GM12878 (cell line): ENCODE measurements at regions of chr2 and their contacts with region 1.

Region 1: GRCh38 chr2:231227309-231228162 is 29.1 kb downstream of the ARMC9 start:
- DNase-seq: peak; percentile 70
- ATAC-seq: peak; percentile 80
- H3K4me3 ChIP-seq: no peak overlapping the region
- H3K27ac ChIP-seq: peak overlapping the region; percentile 80
- H3K4me1 ChIP-seq: peaks cover 29% of the 10 kb centered on the region
- H3K27me3 ChIP-seq: no peaks in the 10 kb centered on the region
- CTCF ChIP-seq: peak; percentile 82 to 90 (median 89)
- EP300 ChIP-seq: no peak
- POLR2A ChIP-seq: no peak; the same call in 1 of the 2 replicates
- RAD21 ChIP-seq: peak; percentile 93

Region 2: DNA sequence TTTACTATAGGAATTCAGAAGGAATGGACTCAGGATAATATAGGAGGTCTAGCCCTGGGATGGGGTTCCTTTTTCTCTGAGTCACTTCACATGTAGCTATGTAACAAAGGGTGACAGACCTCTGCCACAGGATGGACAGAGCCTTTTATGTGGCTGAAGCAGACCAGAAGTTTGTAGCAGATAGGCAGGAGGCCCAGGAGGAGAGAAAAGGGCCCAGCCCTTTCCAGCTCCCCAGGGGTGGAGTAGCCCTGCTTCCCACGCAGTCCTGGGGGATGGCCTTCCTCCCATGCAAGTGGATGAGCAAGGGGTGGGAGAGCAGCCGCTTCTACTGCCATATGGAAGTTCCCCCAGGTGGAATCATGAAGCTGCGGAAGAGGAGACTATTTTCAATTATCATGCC is 11.2 kb after region 1 on chr2:
- CTCF ChIA-PET with region 1: interaction called, 29 read pairs
- POLR2A ChIA-PET with region 1: no interaction called
- RAD21 ChIA-PET with region 1: interaction called, 8 read pairs
- SMC1A ChIA-PET with region 1: interaction called, 4 read pairs
- in situ Hi-C with region 1: no loop called
- intact Hi-C with region 1: no loop called
- DNase-seq: no peak
- ATAC-seq: no peak
- H3K4me3 ChIP-seq: no peak overlapping the region
- H3K27ac ChIP-seq: no peak overlapping the region
- H3K4me1 ChIP-seq: no peaks in the 10 kb centered on the region
- H3K27me3 ChIP-seq: no peaks in the 10 kb centered on the region
- CTCF ChIP-seq: no peak
- EP300 ChIP-seq: no peak
- POLR2A ChIP-seq: no peak
- RAD21 ChIP-seq: no peak

Region 3: GRCh38 chr2:231297108-231297908 is 69.8 kb after region 1 on chr2:
- CTCF ChIA-PET with region 1: interaction called, 72 read pairs
- POLR2A ChIA-PET with region 1: no interaction called
- RAD21 ChIA-PET with region 1: interaction called, 13 read pairs
- SMC1A ChIA-PET with region 1: interaction called, 34 read pairs
- in situ Hi-C with region 1: no loop called
- intact Hi-C with region 1: loop called (anchors 1 kb)
- DNase-seq: peak; percentile 36
- ATAC-seq: peak; percentile 81
- H3K4me3 ChIP-seq: no peak overlapping the region
- H3K27ac ChIP-seq: no peak overlapping the region
- H3K4me1 ChIP-seq: peaks cover 40% of the 10 kb centered on the region
- H3K27me3 ChIP-seq: no peaks in the 10 kb centered on the region
- CTCF ChIP-seq: peak; percentile 73 to 90 (median 81)
- EP300 ChIP-seq: no peak
- POLR2A ChIP-seq: no peak
- RAD21 ChIP-seq: peak; percentile 59

Region 4: DNA sequence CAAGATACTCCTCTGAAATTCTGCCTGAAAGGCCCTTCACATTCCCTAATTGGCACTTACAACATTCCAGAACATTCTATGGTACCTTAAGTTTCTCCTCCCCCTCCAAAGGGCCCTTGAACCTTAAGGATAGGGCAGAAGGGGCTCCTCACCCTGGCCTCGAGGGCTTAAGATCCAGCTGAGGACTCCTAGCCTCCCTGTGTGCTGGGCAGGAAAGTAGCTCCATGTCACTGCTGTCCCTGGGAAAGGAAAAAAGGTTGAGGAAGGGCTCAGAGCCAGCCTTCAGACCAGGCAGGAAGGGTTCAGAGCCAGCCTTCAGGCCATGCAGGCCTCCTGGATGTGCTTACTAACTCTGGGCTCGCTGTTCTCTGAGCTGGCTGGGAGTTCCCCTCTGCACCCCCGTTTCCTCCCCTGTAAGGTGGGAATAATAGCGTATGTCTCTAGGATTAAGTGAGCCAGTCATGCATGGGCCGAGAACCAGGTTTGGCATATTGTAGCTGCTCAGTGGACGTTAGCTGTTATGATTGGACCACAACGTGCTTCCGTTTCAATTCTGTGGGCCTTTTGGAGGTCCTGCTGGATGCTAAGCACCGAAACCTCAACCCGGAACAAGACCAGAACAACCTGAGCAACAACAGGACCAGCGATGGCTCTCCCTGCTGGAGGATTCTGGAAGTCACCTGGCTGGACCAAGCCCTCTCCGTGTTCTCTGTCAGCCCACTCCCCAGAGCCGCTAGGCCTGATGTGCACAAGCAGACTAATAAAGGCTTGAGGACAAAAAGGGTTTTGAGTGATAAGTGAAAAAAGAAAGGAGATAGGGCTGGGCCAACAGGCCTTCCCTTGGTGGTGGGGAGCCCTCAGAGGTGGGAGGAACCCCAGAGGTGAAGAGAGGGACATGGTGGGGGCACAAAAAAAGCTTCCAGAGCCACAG is 166.9 kb after region 1 on chr2:
- CTCF ChIA-PET with region 1: interaction called, 79 read pairs
- POLR2A ChIA-PET with region 1: interaction called, 8 read pairs
- RAD21 ChIA-PET with region 1: interaction called, 52 read pairs
- SMC1A ChIA-PET with region 1: interaction called, 66 read pairs
- in situ Hi-C with region 1: loop called (anchors 5 kb)
- intact Hi-C with region 1: loop called (anchors 1 kb)
- DNase-seq: peak; percentile 87
- ATAC-seq: peak; percentile 66
- H3K4me3 ChIP-seq: peak overlapping the region; percentile 65
- H3K27ac ChIP-seq: peak overlapping the region; percentile 95
- H3K4me1 ChIP-seq: peaks cover 58% of the 10 kb centered on the region
- H3K27me3 ChIP-seq: no peaks in the 10 kb centered on the region
- CTCF ChIP-seq: peak; percentile 52 to 67 (median 61)
- EP300 ChIP-seq: peak in 1 of 2 experiments; percentile 53; a peak in 1 of 4 replicates
- POLR2A ChIP-seq: peak; percentile 76
- RAD21 ChIP-seq: peak; percentile 47

Region 5: DNA sequence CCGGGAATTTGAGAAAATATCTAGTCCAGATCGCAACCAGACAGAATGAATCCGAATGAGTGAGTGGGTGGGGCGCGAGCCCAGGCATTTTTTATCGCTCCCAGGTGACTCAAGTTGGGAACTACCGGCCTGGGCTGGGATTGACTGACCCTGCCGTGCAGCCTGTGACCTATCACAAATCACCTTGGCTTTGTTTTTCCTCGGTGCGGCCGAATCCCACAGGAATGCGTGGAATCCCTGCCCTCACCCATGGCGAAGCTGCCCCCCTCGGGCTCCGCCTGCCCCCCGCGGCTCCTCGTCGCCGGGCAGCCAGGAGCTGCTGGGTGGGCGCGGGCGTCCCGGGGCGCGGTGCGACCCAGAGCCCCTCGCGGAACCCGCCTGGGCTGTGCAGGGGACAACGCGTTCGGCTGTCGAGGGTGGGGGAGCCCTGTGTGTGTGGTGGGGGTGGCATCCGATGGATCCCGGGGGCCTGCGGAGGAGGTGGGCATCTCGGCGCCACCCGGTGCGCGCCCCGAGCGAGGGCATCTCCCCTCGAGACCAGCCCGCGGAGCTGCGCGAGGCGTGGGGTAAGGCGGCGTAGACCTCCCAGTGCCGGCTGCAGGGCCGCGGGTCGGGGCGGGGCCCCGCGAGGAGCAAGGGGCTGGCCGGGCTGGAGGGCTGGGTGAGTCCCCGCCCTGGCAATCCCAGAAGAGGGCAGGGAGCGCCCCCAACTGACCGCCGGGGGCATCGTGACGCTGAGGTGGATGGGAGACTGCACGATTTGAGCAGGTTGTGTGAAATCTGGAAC is 184.5 kb after region 1 on chr2:
- CTCF ChIA-PET with region 1: interaction called, 234 read pairs
- POLR2A ChIA-PET with region 1: interaction called, 3 read pairs
- RAD21 ChIA-PET with region 1: interaction called, 51 read pairs
- SMC1A ChIA-PET with region 1: interaction called, 63 read pairs
- in situ Hi-C with region 1: no loop called
- intact Hi-C with region 1: loop called (anchors 1 kb)
- DNase-seq: no peak
- ATAC-seq: peak; percentile 100
- H3K4me3 ChIP-seq: peak overlapping the region; percentile 66
- H3K27ac ChIP-seq: no peak overlapping the region
- H3K4me1 ChIP-seq: no peaks in the 10 kb centered on the region
- H3K27me3 ChIP-seq: no peaks in the 10 kb centered on the region
- CTCF ChIP-seq: peak; percentile 72 to 95 (median 94)
- EP300 ChIP-seq: no peak
- POLR2A ChIP-seq: no peak
- RAD21 ChIP-seq: peak; percentile 87

Region 6: GRCh38 chr2:231482806-231483391 is 255.4 kb after region 1 on chr2:
- CTCF ChIA-PET with region 1: interaction called, 11 read pairs
- POLR2A ChIA-PET with region 1: interaction called, 3 read pairs
- RAD21 ChIA-PET with region 1: no interaction called
- SMC1A ChIA-PET with region 1: interaction called, 4 read pairs
- in situ Hi-C with region 1: no loop called
- intact Hi-C with region 1: no loop called
- DNase-seq: no peak
- ATAC-seq: peak; percentile 90
- H3K4me3 ChIP-seq: peak overlapping the region; percentile 79
- H3K27ac ChIP-seq: peak overlapping the region; percentile 93
- H3K4me1 ChIP-seq: peaks cover 15% of the 10 kb centered on the region
- H3K27me3 ChIP-seq: no peaks in the 10 kb centered on the region
- CTCF ChIP-seq: peak; percentile 85 to 95 (median 91)
- EP300 ChIP-seq: no peak
- POLR2A ChIP-seq: peak; percentile 80
- RAD21 ChIP-seq: peak; percentile 48; the same call in 1 of the 2 replicates